ENCODE measurements at regions of chr1 and their contacts with region 1.

Region 1: DNA sequence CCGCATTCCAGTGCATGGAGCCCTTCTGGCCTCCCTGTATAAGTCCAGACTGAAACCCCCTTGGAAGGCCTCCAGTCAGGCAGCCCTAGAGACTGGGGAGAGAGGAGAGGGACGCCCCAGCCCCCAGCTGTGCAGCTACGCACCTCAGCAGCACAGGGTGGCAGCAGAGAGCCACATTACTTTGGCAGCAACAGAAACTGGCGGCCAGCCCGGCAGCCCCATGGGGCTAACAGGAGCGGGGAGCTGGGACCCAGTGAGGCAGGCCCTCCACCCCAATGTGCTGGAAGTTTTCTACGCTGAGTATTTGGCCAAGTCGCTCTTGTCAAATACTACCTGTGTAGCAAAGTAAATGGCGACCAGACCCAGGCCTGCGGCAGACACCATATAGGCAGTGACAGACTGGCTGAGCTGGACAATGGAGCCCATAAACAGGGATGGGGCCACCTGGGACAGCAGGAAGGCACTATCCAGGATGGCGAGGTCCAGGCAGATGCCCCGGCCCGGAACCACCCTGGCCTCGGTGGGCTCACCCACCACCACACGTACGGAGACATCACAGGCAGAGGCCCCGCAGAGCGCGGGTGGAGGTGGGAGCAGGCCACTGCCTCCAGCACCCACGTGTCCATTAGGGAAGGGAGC is 21.2 kb downstream of the SLC45A3 start:
- DNase-seq: no peak
- ATAC-seq: peak; percentile 95
- H3K4me3 ChIP-seq: no peak overlapping the region
- H3K27ac ChIP-seq: no peak overlapping the region
- H3K4me1 ChIP-seq: no peaks in the 10 kb centered on the region; the same call in 1 of the 2 replicates
- H3K27me3 ChIP-seq: no peaks in the 10 kb centered on the region
- CTCF ChIP-seq: peak; percentile 93 to 95 (median 94)
- EP300 ChIP-seq: no peak
- POLR2A ChIP-seq: no peak
- RAD21 ChIP-seq: peak; percentile 96

Region 2: DNA sequence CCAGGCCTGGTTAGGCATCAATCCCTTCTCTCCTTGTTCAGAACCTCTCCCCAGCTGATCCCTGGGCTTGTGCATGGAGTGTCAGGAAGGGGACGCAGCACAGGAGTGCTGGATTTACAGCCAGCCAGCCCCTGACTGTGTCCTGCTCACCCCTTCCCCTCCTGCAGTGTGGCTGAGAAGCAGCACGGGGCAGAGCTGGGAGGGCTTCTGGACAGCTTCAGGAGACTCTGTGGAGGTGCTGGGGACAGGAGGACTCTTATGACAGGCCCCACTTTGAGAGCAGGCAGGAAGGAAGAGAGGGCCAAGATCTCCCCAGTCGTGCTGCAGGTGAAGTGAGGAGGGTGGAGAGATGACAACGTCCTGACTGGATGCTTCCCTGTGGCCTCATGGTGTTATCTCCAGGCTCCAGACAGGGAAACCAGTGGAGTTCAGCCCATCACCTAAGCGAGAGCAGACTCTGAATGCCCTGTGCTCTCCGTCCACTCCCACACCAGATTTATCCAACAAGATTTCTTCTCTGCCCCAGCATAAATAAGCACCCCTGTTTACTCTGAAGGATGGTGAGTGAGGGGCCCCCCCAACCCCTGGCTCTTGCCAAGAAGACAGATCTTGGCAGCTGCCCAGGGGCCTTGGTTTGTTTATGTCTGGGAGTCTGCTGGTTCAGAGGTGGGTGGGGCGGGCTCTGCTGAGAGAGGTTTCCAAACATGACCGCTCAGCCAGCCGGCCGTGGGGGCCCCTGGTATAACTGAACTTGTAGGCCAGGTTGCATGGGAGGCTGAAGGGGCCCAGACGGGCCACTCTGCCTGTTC is 410.1 kb before region 1 on chr1:
- CTCF ChIA-PET with region 1: no interaction called
- POLR2A ChIA-PET with region 1: no interaction called
- RAD21 ChIA-PET with region 1: no interaction called
- SMC1A ChIA-PET with region 1: no interaction called
- in situ Hi-C with region 1: no loop called
- intact Hi-C with region 1: no loop called
- DNase-seq: no peak
- ATAC-seq: no peak
- H3K4me3 ChIP-seq: no peak overlapping the region
- H3K27ac ChIP-seq: no peak overlapping the region
- H3K4me1 ChIP-seq: no peaks in the 10 kb centered on the region
- H3K27me3 ChIP-seq: peaks cover 2 to 3% of the 10 kb centered on the region in 2 experiments; a peak in 3 of 4 replicates
- CTCF ChIP-seq: no peak
- EP300 ChIP-seq: no peak
- POLR2A ChIP-seq: no peak
- RAD21 ChIP-seq: no peak

Region 3: DNA sequence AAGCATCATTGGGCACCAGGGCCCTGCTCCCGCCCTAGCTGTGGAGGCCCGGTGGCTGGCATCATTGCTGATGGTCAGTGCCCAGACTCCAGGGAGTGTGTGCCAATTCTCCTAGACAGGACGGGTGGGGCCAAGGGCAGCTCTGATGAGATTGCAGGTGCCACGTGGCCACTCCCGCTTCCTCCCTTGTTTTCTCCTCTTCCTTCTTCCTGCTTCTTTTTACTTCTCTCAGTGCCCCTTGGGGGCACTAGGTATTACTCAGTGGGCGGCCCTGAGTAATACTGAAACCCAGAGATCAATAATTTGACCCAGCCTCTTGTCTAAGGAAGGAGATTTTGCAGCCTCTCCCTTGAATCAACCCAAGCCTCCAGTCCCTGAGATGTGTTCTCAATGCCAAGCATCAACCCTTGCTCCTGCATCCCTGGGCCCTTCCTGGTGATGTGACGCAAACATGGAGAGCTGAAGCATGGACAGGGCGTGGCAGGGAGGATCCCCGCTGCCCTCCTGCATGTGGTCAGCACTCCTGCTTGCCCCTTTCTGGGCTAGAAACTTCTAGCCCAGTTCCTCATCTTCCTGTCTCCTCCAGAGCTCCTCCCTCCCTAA is 122.2 kb before region 1 on chr1:
- CTCF ChIA-PET with region 1: interaction called, 217 read pairs
- POLR2A ChIA-PET with region 1: no interaction called
- RAD21 ChIA-PET with region 1: interaction called, 78 read pairs
- SMC1A ChIA-PET with region 1: interaction called, 5 read pairs
- in situ Hi-C with region 1: no loop called
- intact Hi-C with region 1: no loop called
- DNase-seq: no peak
- ATAC-seq: peak; percentile 67
- H3K4me3 ChIP-seq: no peak overlapping the region
- H3K27ac ChIP-seq: no peak overlapping the region
- H3K4me1 ChIP-seq: no peaks in the 10 kb centered on the region
- H3K27me3 ChIP-seq: peaks cover 0 to 3% of the 10 kb centered on the region in 2 experiments; a peak in 2 of 4 replicates
- CTCF ChIP-seq: no peak
- EP300 ChIP-seq: no peak
- POLR2A ChIP-seq: no peak
- RAD21 ChIP-seq: no peak

Region 4: DNA sequence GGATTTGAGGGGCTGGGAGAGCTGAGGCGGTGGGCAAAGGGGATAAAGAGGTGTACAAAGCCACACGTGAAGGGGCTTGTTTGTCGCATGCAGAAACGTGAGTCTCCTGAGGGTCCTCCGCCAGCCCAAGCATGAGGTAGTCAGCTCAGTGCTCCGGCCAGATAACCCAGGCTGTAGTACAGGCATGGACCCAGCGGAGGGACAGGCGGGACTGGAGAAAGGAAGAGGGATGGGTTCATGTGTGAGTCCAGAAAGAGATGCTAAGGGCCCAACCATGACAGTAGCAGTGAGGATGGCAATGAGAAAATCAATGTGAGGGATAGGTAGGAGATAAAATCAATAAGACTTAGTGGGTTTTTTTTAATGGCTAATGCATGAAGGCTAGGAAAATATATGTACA is 13.5 kb before region 1 on chr1:
- CTCF ChIA-PET with region 1: interaction called, 105 read pairs
- POLR2A ChIA-PET with region 1: interaction called, 3 read pairs
- RAD21 ChIA-PET with region 1: interaction called, 15 read pairs
- SMC1A ChIA-PET with region 1: interaction called, 118 read pairs
- in situ Hi-C with region 1: no loop called
- intact Hi-C with region 1: no loop called
- DNase-seq: no peak
- ATAC-seq: no peak
- H3K4me3 ChIP-seq: no peak overlapping the region
- H3K27ac ChIP-seq: no peak overlapping the region
- H3K4me1 ChIP-seq: no peaks in the 10 kb centered on the region
- H3K27me3 ChIP-seq: no peaks in the 10 kb centered on the region
- CTCF ChIP-seq: no peak
- EP300 ChIP-seq: no peak
- POLR2A ChIP-seq: no peak
- RAD21 ChIP-seq: no peak

Region 5: DNA sequence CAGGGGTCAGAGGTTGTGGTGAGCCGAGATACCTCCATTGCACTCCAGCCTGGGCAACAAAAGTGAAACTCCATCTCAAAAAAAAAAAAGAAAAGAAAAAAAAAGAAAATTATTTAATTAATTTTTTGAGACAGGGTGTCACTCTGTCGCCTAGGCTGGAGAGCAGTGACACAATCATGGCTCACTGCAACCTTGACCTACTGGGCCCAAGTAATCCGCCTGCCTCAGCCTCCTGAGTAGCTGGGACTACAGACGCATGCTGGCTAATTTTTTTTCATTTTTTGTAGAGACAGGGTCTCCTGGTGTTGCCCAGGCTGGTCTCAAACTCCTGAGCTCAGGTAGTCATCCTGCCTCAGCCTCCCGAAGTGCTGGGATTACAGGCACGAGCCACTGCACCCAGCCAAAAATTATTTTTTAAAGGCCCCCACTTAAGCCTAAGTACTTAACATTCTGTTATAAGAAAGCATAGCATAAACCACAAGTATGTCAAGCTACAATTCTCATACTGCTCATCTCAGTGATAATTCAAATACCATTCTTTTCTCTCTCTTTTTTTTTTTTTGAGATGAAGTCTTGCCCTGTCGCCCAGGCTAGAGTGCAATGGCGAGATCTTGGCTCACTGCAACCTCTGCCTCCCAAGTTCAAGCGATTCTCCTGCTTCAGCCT is 71.0 kb after region 1 on chr1:
- CTCF ChIA-PET with region 1: interaction called, 32 read pairs
- POLR2A ChIA-PET with region 1: no interaction called
- RAD21 ChIA-PET with region 1: interaction called, 16 read pairs
- SMC1A ChIA-PET with region 1: interaction called, 20 read pairs
- in situ Hi-C with region 1: no loop called
- intact Hi-C with region 1: no loop called
- DNase-seq: no peak
- ATAC-seq: no peak
- H3K4me3 ChIP-seq: no peak overlapping the region
- H3K27ac ChIP-seq: no peak overlapping the region
- H3K4me1 ChIP-seq: no peaks in the 10 kb centered on the region
- H3K27me3 ChIP-seq: no peaks in the 10 kb centered on the region
- CTCF ChIP-seq: no peak
- EP300 ChIP-seq: no peak
- POLR2A ChIP-seq: no peak
- RAD21 ChIP-seq: no peak

Region 6: GRCh38 chr1:205791568-205792180 is 132.6 kb after region 1 on chr1:
- CTCF ChIA-PET with region 1: interaction called, 46 read pairs
- POLR2A ChIA-PET with region 1: no interaction called
- RAD21 ChIA-PET with region 1: interaction called, 29 read pairs
- SMC1A ChIA-PET with region 1: interaction called, 26 read pairs
- in situ Hi-C with region 1: no loop called
- intact Hi-C with region 1: no loop called
- DNase-seq: no peak
- ATAC-seq: peak; percentile 98
- H3K4me3 ChIP-seq: no peak overlapping the region
- H3K27ac ChIP-seq: no peak overlapping the region
- H3K4me1 ChIP-seq: peaks cover 7% of the 10 kb centered on the region
- H3K27me3 ChIP-seq: no peaks in the 10 kb centered on the region; a peak in 1 of 4 replicates
- CTCF ChIP-seq: peak; percentile 87 to 94 (median 91); a peak in 5 of 6 replicates
- EP300 ChIP-seq: no peak
- POLR2A ChIP-seq: no peak
- RAD21 ChIP-seq: peak; percentile 78

Region 7: DNA sequence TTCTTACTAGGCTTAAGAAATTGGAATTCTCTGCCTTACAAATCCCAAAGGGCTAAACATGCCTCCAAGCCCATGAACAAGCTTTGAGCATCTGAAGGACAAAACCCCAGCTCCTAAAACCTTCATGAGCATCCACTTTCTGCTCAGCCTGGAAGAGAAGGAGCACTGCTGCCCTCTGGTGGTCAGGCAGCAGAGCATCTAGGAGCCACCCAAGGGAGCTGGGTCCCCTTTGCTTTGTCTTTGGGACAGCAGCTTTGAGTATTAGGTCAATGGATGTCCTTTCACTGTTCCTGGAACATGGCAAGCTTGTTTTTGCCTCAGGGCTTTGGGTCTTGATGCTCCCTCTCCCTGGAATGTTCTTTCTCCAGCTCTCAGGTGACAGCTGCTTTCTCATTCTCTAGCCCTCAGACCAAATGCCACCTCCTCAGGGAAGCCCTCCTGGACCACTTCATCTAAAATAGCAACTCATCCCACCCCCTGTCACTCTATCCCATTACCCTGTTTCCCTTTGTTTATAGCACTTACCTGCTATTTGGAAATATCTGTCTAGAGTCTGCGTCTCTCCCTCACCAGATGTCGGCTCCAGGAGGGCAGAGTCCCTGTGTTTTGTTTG is 318.4 kb after region 1 on chr1:
- CTCF ChIA-PET with region 1: interaction called, 147 read pairs
- POLR2A ChIA-PET with region 1: interaction called, 3 read pairs
- RAD21 ChIA-PET with region 1: interaction called, 155 read pairs
- SMC1A ChIA-PET with region 1: interaction called, 105 read pairs
- in situ Hi-C with region 1: no loop called
- intact Hi-C with region 1: loop called (anchors 1 kb)
- DNase-seq: peak; percentile 23
- ATAC-seq: peak; percentile 98
- H3K4me3 ChIP-seq: no peak overlapping the region
- H3K27ac ChIP-seq: no peak overlapping the region
- H3K4me1 ChIP-seq: no peaks in the 10 kb centered on the region
- H3K27me3 ChIP-seq: no peaks in the 10 kb centered on the region; a peak in 1 of 4 replicates
- CTCF ChIP-seq: peak; percentile 90 to 98 (median 93)
- EP300 ChIP-seq: no peak
- POLR2A ChIP-seq: no peak
- RAD21 ChIP-seq: peak; percentile 99

Measured in GM12878 (cell line).